ENCODE measurements at regions of chr15 and their contacts with region 1.

Region 1: GRCh38 chr15:85730001-85730820 is 64.5 kb downstream of the KLHL25 start:
- DNase-seq: no peak
- ATAC-seq: peak; percentile 77

Region 2: GRCh38 chr15:84658080-84658787 is 1072.0 kb before region 1 on chr15 and contains the start of gene NMB:
- intact Hi-C with region 1: loop called in 1 of 2 experiments (anchors 10 kb)
- DNase-seq: peak; percentile 88
- ATAC-seq: peak; percentile 67
- total RNA-seq, gene NMB: 1.8 to 2.8 TPM

Region 3: DNA sequence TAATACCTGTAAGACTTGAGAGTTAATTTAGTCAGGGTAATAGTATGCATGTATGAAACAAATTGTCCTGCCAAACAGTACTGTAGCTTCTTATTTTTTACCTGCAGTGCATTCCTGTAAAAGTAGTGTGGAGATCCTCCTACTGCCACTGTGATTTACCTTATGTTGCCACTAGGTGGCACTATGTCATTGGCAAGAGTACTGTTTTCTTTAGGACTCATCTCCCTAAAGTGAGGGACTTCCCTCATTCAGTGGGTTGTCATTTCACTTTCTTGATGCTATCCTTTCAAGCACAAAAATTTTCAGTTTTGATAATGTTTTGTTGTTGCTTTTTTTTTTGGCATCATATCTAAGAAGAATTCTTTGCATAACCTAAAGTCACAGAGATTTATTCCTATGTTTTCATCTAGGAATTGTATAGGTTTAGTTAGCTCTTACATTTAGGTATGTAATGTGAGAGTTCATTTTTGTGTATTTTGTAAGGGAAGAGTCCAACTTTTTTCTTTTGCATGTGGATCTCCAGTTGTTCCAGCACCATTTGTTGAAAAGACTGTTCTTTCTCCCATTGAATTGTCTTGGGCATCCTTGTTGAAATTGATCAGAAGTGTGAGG is 244.1 kb before region 1 on chr15:
- intact Hi-C with region 1: loop called in 1 of 2 experiments (anchors 10 kb)
- DNase-seq: peak; percentile 40 to 53
- ATAC-seq: peak; percentile 85

Region 4: DNA sequence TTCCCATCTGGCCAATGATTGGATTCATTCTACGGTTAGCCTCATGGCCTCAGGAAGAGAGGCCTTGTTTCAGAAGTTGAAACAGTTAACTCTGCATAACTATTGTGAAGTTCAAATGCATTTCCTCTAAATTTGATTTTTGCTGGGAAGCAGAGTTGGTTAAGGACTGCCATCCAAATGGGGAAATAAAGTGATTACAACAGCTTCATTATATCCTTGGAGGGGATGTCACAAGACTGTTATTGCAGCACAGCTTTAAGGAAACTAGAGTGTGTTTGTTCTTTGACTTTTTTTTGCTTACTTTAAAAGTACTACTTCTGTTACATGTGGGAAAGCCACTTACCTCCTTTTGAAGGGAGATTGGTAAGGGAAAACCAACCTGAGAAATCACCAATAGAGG is 185.0 kb before region 1 on chr15:
- intact Hi-C with region 1: no loop called
- DNase-seq: no peak
- ATAC-seq: no peak

Region 5: GRCh38 chr15:85831415-85832113 is 101.4 kb after region 1 on chr15:
- intact Hi-C with region 1: loop called in 1 of 2 experiments (anchors 5 kb)
- DNase-seq: peak; percentile 59 to 81
- ATAC-seq: peak; percentile 86